HEK293 (cell line): ENCODE measurements at regions of chr11 and their contacts with region 1.

Region 1: DNA sequence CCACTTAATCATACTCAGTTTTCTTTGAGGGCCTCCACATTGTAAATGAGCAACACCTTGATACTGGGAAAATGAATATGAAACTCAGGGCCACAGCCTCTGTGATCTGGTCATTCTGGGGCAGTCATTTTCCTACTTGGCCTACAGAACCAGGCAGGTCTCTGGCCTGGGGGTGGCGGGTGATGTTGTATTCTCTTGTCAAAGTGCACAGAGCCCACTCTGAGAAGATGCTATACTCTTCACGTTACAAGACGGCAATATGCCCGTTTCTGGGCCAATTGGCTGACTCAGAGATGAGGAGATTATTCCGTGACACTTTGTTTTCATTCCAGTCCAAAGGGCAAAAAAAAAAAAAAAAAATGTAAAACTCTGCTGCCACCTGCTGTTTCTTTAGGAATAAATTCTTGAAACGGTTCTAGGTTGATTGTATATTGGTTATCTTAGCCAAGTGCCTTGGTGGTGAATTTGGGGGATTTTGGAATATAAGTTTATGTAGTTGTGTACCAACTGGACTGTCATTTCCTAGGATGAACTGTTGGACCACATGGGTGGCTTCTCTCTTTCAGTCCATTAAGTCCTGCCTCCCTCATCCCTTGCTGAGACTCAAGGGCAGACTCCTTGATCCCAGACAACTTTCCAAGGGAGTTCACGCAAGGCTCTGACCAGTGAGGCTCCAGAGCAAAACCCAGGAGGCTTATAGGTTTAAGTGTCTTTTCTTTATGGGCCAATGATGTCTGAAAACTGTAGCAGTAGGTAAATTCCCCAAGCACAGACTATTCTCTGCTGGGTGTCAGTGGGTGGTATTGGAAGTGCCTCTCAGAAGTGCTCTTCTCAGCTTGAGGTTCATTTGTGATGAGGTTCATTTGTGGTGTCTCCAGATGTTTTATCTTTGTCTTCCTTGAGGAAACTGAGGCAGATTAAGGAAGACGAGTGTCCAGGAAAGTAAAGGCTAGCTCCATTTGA is 18.2 kb downstream of the ADM start:
- H3K4me3 ChIP-seq: no peak overlapping the region
- H3K27ac ChIP-seq: no peak overlapping the region
- H3K4me1 ChIP-seq: no peaks in the 10 kb centered on the region
- CTCF ChIP-seq: no peak

Region 2: DNA sequence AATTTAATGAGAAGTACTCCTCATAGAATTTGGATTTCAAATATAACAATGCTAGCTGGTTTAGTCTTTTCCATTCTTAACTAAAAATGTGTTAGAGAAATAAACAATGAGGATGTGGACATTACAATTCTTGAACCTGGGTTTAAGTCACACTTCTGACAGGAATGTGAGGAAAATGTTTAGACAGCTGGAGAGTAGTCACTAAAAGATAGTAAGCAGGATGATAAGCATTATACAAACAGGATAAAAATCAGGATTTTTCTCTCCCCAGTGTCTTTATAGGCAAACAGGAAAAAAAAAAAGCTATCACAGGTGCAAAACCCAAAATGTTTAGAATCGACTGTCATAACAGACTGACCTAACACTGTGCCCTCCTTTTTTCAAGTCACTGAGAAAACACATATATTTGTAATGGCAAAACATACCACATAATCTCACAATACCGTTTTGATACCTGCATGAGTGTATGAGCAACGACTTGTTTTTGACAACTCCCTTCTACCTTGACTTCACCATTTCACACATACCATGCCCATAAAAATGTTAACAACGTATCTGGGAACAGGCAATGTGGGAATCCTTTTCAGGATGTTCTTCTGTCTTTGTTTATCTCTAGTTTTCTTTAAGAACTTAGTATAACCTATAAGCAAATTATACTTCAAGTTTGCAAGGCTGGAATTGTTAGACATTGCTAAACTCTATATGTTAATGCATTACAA is 271.1 kb before region 1 on chr11:
- CTCF ChIA-PET with region 1: no interaction called
- POLR2A ChIA-PET with region 1: no interaction called
- H3K4me3 ChIP-seq: no peak overlapping the region
- H3K27ac ChIP-seq: no peak overlapping the region
- H3K4me1 ChIP-seq: no peaks in the 10 kb centered on the region
- CTCF ChIP-seq: no peak

Region 3: GRCh38 chr11:10158461-10158860 is 164.7 kb before region 1 on chr11:
- CTCF ChIA-PET with region 1: no interaction called
- POLR2A ChIA-PET with region 1: no interaction called
- H3K4me3 ChIP-seq: no peak overlapping the region
- H3K27ac ChIP-seq: no peak overlapping the region
- H3K4me1 ChIP-seq: no peaks in the 10 kb centered on the region
- CTCF ChIP-seq: no peak

Region 4: GRCh38 chr11:10208131-10208575 is 115.0 kb before region 1 on chr11:
- CTCF ChIA-PET with region 1: interaction called, 11 read pairs
- POLR2A ChIA-PET with region 1: no interaction called
- H3K4me3 ChIP-seq: no peak overlapping the region
- H3K27ac ChIP-seq: no peak overlapping the region
- H3K4me1 ChIP-seq: no peaks in the 10 kb centered on the region
- CTCF ChIP-seq: no peak

Region 5: DNA sequence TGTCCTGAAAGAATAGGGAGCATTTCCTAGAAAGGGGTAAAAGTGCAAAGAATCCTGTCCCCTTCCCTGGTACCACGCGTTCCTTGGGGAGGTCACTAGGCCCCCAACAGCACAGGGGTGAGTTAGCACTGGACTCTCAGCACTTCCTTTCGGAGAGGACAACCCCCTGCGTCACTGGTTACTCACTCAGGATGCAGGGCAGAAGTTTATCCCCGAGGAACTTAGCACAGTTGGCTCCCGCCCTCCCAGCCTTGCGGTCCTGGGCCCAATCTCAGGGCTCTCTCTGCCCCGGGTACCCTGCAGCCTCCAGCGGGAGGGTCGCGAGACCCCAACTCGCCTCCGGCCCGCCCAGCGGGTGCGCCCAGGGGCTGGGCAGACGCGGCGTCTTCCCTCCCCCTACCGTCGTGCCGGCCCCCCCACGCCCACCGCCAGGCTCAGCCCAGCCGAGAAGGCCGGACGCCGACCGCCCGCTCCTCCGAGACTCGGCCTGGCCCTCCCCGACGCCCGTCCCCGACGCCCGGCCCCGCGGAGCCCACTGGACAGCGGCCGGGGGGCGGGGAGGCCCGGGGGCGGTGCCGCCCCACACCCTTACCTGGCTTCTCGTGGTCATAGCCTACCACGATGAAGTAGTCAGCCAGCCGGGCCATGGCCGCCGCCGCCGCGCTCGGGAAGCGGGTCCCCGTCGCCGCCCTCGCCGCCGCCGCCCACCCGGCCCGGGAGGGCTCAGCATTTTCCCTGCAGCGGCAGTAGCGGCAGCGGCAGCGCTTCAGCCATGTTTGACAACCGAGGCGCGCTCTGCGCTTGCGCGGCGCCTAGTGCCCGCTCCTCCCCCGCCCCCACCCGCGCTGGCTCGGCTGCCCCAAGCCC is 29.5 kb before region 1 on chr11 and contains the start of gene SBF2:
- CTCF ChIA-PET with region 1: no interaction called
- POLR2A ChIA-PET with region 1: no interaction called
- H3K4me3 ChIP-seq: peak within 1 kb of the TSS; percentile 75
- H3K27ac ChIP-seq: peak within 1 kb of the TSS; percentile 79
- H3K4me1 ChIP-seq: no peaks in the 10 kb centered on the region
- CTCF ChIP-seq: no peak

Region 6: GRCh38 chr11:10366568-10367370 is 43.7 kb after region 1 on chr11:
- CTCF ChIA-PET with region 1: interaction called, 62 read pairs
- POLR2A ChIA-PET with region 1: no interaction called
- H3K4me3 ChIP-seq: no peak overlapping the region
- H3K27ac ChIP-seq: no peak overlapping the region
- H3K4me1 ChIP-seq: no peaks in the 10 kb centered on the region
- CTCF ChIP-seq: peak; percentile 64

Region 7: GRCh38 chr11:10450464-10451425 is 127.6 kb after region 1 on chr11:
- CTCF ChIA-PET with region 1: no interaction called
- POLR2A ChIA-PET with region 1: no interaction called
- H3K4me3 ChIP-seq: peak overlapping the region; percentile 44
- H3K27ac ChIP-seq: peak overlapping the region; percentile 39; the same call in 1 of the 2 replicates
- H3K4me1 ChIP-seq: no peaks in the 10 kb centered on the region
- CTCF ChIP-seq: no peak